ENCODE measurements at regions of chr5 and their contacts with region 1.

Region 1: GRCh38 chr5:169302491-169303118 is 1.7 kb upstream of the SLIT3 start:
- DNase-seq: peak; percentile 80
- ATAC-seq: peak; percentile 49
- H3K4me3 ChIP-seq: no peak overlapping the region
- H3K27ac ChIP-seq: no peak overlapping the region
- H3K4me1 ChIP-seq: no peaks in the 10 kb centered on the region
- H3K27me3 ChIP-seq: peaks cover 59% of the 10 kb centered on the region
- CTCF ChIP-seq: peak; percentile 97

Region 2: GRCh38 chr5:168679515-168679920 is 623.1 kb before region 1 on chr5:
- CTCF ChIA-PET with region 1: no interaction called
- POLR2A ChIA-PET with region 1: no interaction called
- intact Hi-C with region 1: loop called (anchors 5 kb)
- DNase-seq: peak; percentile 76
- ATAC-seq: peak; percentile 87
- H3K4me3 ChIP-seq: no peak overlapping the region
- H3K27ac ChIP-seq: no peak overlapping the region
- H3K4me1 ChIP-seq: no peaks in the 10 kb centered on the region
- H3K27me3 ChIP-seq: no peaks in the 10 kb centered on the region
- CTCF ChIP-seq: peak; percentile 84